ENCODE measurements at regions of chr3 and their contacts with region 1.

Region 1: DNA sequence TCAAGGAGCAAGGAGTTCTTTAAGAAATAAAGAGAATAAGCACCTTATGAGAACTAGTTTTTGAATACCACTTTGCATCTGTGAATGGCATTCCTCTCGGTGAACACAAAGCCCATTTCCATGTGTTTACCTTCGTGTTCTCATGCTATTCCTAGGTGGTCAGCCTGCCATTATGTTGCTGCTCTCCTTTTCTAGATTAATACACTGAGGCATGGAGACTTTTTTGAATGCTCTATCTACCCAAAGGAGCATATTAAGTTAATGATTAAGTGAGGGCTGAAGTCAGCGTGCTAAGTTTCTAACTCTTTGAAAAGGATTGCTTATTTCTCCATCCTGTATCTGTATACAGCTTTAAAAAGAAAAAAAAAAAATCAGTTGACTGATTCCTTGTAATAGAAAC is 394.5 kb downstream of the MECOM start:
- DNase-seq: no peak
- ATAC-seq: no peak
- H3K4me3 ChIP-seq: no peak overlapping the region
- H3K27ac ChIP-seq: no peak overlapping the region
- H3K4me1 ChIP-seq: no peaks in the 10 kb centered on the region
- H3K27me3 ChIP-seq: no peaks in the 10 kb centered on the region
- CTCF ChIP-seq: no peak
- EP300 ChIP-seq: no peak
- POLR2A ChIP-seq: no peak
- RAD21 ChIP-seq: no peak

Region 2: GRCh38 chr3:168738527-168739325 is 530.3 kb before region 1 on chr3:
- CTCF ChIA-PET with region 1: no interaction called
- POLR2A ChIA-PET with region 1: interaction called, 11 read pairs
- RAD21 ChIA-PET with region 1: no interaction called
- SMC1A ChIA-PET with region 1: no interaction called
- in situ Hi-C with region 1: no loop called
- intact Hi-C with region 1: no loop called
- DNase-seq: no peak
- ATAC-seq: no peak
- H3K4me3 ChIP-seq: no peak overlapping the region
- H3K27ac ChIP-seq: no peak overlapping the region
- H3K4me1 ChIP-seq: no peaks in the 10 kb centered on the region
- H3K27me3 ChIP-seq: no peaks in the 10 kb centered on the region
- CTCF ChIP-seq: no peak
- EP300 ChIP-seq: no peak
- POLR2A ChIP-seq: no peak
- RAD21 ChIP-seq: no peak

Region 3: DNA sequence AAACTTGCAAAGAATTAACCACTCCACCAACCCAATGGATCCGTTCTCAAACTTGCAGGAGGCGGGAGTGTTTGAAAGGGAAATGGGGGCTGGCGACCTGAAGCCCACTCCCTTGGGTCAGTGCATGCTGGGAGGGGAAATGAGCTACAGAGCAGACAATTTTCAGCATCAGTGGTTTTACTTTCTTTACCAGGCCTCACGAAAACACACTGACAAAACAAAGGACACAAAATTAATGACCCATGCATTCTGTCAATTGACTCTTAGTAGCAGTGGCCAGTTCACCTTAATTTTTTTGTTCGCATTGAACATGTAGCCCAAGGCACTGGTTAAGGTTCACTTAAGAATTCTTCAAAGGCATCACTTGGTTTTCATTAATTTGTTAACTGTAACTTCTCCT is 19.0 kb before region 1 on chr3:
- CTCF ChIA-PET with region 1: no interaction called
- POLR2A ChIA-PET with region 1: no interaction called
- RAD21 ChIA-PET with region 1: no interaction called
- SMC1A ChIA-PET with region 1: no interaction called
- in situ Hi-C with region 1: no loop called
- intact Hi-C with region 1: no loop called
- DNase-seq: no peak
- ATAC-seq: no peak
- H3K4me3 ChIP-seq: no peak overlapping the region
- H3K27ac ChIP-seq: no peak overlapping the region
- H3K4me1 ChIP-seq: no peaks in the 10 kb centered on the region
- H3K27me3 ChIP-seq: no peaks in the 10 kb centered on the region
- CTCF ChIP-seq: no peak
- EP300 ChIP-seq: no peak
- POLR2A ChIP-seq: no peak
- RAD21 ChIP-seq: no peak